Aorta (tissue), 5 donors: ENCODE measurements at regions of chr18 and their contacts with region 1.

Region 1: DNA sequence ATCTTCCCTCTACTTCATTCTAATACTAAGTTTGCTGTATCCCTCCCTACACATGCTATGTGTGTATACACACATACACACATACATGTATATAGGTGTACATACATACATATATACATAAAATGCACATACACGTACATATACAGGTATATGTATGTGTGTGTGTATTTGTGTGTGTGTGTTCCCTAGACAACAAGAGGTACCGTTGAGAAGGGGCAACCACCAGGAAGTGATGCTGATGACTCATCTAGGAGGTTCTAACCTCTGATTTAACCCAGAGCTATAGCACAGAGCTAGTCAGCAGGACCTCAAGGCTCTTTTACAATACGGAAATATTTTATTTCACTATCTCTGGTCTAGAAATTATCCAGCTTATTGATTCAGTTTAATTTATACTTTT is 139.2 kb downstream of the LAMA3 start:
- DNase-seq: no peak
- ATAC-seq: no peak
- H3K4me3 ChIP-seq: no peak overlapping the region
- H3K27ac ChIP-seq: no peak overlapping the region
- H3K4me1 ChIP-seq: peaks cover 0 to 7% of the 10 kb centered on the region in 2 donors
- H3K27me3 ChIP-seq: no peaks in the 10 kb centered on the region

Region 2: DNA sequence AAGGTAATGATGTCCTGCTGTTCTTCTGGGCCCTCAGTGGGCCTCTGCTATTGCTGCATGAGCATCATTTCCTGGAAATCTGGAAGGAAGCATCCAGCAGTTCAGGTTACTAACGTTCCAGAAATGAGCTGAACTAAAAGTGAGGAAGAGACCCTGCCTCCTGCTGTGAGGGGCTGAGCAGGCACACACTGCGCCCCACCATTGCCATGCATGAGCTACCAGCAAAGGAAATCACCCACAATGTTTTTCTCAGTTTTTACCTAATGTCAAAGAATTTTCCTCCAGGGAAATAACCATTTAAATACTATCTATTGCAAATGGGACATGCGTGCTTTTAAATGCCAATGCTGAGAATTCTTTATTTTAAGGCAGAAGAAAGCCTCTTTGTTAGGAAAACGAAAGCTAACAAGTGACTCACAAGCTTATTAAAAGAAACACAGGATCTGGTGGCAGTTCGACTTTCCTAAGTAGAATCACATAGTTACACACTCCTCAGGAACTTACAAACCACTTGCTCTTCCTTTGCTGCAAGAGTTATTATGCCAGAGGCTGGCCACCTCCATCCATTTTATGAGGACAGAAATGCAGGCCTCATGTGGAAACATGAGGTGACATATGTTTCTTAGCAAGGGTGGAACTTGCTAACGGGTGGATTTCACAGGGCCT is 33.5 kb after region 1 on chr18:
- intact Hi-C with region 1: loop called in 1 of 2 experiments (anchors 1 kb)
- DNase-seq: no peak
- ATAC-seq: no peak
- H3K4me3 ChIP-seq: no peak overlapping the region
- H3K27ac ChIP-seq: peak overlapping the region in 1 of 2 donors; percentile 80
- H3K4me1 ChIP-seq: peaks cover 0 to 12% of the 10 kb centered on the region in 2 donors
- H3K27me3 ChIP-seq: no peaks in the 10 kb centered on the region

Region 3: DNA sequence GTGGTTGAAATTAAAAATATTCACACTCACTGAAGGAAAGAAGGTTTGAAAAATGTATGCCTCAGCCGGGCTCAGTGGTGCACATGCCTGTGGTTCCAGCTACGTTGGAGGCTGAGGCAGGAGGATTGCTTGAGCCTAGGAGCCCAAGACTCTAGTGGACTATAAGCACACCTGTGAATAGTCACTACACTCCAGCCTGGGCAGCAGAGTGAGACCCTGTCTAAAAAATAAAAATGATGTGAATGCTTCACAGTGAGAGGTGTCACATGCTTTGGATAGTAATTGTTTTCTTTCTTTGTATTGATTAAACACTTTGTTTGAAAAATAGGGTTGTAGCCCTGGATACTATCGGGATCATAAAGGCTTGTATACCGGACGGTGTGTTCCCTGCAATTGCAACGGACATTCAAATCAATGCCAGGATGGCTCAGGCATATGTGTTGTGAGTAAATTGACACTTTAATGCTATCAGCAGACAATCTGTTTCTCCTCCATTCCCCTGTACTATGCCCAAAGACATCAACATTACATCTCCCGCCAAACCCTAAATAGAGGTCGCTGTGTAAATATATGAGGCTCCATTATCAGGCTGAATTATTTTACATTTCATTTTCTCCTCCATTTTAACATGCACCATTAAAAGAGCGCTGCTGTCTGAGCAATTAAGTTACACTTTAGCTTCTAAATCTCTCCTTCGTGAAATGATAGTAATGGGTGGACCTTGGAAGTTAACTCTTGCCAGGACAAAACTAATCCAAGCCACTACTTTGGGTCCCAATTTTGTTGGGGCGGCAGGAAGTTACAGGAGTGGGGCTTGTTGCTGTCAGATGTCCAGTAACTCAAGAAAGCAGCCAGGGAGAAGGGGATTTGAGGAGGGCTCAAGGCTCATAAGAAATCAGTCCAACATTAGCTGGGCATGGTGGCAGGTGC is 47.8 kb after region 1 on chr18:
- intact Hi-C with region 1: loop called in 1 of 2 experiments (anchors 2 kb)
- DNase-seq: no peak
- ATAC-seq: no peak
- H3K4me3 ChIP-seq: no peak overlapping the region
- H3K27ac ChIP-seq: no peak overlapping the region
- H3K4me1 ChIP-seq: no peaks in the 10 kb centered on the region
- H3K27me3 ChIP-seq: no peaks in the 10 kb centered on the region

Region 4: DNA sequence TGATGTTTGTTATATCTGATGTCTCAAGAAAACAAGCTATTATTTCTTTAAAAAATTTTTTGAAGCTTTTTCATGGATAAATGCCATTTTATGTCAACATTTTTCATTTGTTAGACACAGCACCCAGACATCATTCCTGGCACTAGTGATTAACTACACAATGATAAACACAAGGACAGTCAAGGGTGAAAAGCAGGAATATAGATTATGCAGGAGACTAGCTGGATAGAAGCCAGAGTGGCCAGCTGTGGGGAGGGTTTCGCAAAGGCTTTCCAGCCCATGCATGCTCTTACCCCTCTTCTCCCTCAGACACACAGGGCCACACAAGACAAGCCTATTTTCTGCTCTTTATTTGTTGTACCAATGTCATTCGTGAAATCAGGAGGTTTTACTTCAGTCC is 59.1 kb after region 1 on chr18:
- intact Hi-C with region 1: no loop called
- DNase-seq: no peak
- ATAC-seq: no peak
- H3K4me3 ChIP-seq: no peak overlapping the region
- H3K27ac ChIP-seq: no peak overlapping the region
- H3K4me1 ChIP-seq: peaks cover 2 to 7% of the 10 kb centered on the region in 2 donors
- H3K27me3 ChIP-seq: no peaks in the 10 kb centered on the region